ENCODE measurements at regions of chr4 and their contacts with region 1.

Region 1: DNA sequence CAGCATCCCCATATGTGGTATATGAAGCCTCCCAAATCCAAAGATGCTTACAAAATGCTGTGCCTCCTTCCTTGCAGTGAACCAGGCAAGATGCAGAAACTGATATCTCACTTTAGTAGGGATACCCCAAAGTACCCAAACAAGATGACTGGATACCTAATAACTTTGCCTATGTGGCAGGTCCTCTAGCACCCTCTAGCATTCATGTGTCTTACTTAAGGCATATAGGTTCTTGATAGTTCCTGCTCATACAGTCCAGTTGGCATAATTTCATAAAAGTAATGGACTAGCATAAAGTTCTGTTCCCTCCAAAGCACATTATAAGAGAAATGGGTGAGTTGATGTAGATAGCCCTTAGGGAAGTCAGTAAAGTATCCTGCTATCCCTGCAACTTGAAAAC is 36.8 kb upstream of the SPP1 start:
- DNase-seq: no peak
- H3K4me3 Mint-ChIP-seq: no peak overlapping the region
- H3K27ac Mint-ChIP-seq: no peak overlapping the region
- H3K4me1 Mint-ChIP-seq: no peaks in the 10 kb centered on the region
- H3K27me3 Mint-ChIP-seq: peaks cover 10% of the 10 kb centered on the region

Region 2: GRCh38 chr4:87926554-87927098 is 12.1 kb before region 1 on chr4:
- intact Hi-C with region 1: loop called (anchors 1 kb)
- DNase-seq: no peak
- H3K4me3 Mint-ChIP-seq: no peak overlapping the region
- H3K27ac Mint-ChIP-seq: no peak overlapping the region
- H3K4me1 Mint-ChIP-seq: no peaks in the 10 kb centered on the region
- H3K27me3 Mint-ChIP-seq: no peaks in the 10 kb centered on the region

Measured in activated T-helper 2 cell treated with anti-CD3 and anti-CD28 coated beads, Interferon-gamma antibody, Interleukin-2, Interleukin-4, amounts not matched to agents 10 μg/mL and 5 μg/mL and 100 μg/mL, durations not matched to agents 14 hours and 24 hours and 36 hours (primary cell).